HCT116 (cell line): ENCODE measurements at regions of chr17 and their contacts with region 1.

Region 1: DNA sequence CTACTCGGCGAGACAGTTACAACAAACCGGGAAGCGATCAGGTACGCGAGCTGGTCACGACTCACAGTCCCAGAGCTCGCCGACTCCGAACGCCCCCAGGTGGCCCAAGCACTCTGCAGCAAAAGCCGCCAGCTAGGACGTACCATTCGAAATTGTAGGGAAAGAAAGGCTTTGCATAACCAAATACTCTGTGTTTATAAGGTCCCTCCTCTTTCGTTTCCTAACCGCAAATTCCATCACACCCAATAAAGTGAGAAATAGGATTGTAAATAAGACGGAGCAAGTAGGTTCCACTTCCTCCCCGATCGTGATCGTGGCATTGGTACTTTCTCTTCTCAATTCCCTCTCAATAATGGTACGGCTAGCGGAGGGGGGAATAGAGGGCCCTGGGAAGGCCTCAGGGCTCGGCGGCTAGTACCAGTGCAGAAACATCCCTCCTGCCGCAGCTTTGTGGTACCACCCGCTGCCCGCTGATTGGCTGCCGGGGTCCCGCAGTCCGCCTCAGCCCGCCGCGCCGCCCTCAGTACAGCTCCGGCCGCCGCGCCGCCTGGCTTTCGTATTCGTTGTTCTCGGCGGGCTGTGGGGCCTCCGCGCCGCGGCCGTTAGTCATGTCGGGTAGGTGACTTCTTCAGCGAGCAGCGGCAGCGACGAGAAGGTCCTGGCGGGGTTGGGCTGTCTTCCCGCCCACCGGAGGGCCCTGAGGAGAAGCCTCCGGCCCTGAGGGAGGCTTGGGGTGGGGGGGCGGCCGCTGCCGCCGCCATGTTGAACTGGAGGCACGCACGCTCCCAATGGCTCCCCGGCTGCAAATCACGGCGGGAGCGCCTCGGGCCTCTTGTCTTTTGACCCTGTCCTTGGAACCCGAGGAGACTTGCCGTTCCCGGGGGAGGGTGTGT is at the start of gene TAF15:
- DNase-seq: peak; percentile 95
- ATAC-seq: peak; percentile 89
- H3K4me3 ChIP-seq: peak within 1 kb of the TSS; percentile 76 to 89
- H3K27ac ChIP-seq: peak within 1 kb of the TSS; percentile 66
- H3K4me1 ChIP-seq: peaks cover 25 to 41% of the 10 kb centered on the region in 2 experiments
- H3K27me3 ChIP-seq: no peaks in the 10 kb centered on the region
- CTCF ChIP-seq: peak; percentile 75 to 86 (median 78); a peak in 5 of 6 replicates
- POLR2A ChIP-seq: peak; percentile 77
- RAD21 ChIP-seq: peak; percentile 57
- total RNA-seq, gene TAF15: 346 TPM

Region 2: GRCh38 chr17:35612924-35613521 is 196.2 kb before region 1 on chr17:
- CTCF ChIA-PET with region 1: interaction called, 3 read pairs
- POLR2A ChIA-PET with region 1: no interaction called
- RAD21 ChIA-PET with region 1: no interaction called
- intact Hi-C with region 1: loop called (anchors 10 kb)
- DNase-seq: peak; percentile 12
- ATAC-seq: peak; percentile 58
- H3K4me3 ChIP-seq: no peak overlapping the region
- H3K27ac ChIP-seq: no peak overlapping the region
- H3K4me1 ChIP-seq: no peaks in the 10 kb centered on the region
- H3K27me3 ChIP-seq: no peaks in the 10 kb centered on the region
- CTCF ChIP-seq: peak; percentile 44 to 75 (median 68); a peak in 5 of 6 replicates
- POLR2A ChIP-seq: no peak
- RAD21 ChIP-seq: peak; percentile 62

Region 3: DNA sequence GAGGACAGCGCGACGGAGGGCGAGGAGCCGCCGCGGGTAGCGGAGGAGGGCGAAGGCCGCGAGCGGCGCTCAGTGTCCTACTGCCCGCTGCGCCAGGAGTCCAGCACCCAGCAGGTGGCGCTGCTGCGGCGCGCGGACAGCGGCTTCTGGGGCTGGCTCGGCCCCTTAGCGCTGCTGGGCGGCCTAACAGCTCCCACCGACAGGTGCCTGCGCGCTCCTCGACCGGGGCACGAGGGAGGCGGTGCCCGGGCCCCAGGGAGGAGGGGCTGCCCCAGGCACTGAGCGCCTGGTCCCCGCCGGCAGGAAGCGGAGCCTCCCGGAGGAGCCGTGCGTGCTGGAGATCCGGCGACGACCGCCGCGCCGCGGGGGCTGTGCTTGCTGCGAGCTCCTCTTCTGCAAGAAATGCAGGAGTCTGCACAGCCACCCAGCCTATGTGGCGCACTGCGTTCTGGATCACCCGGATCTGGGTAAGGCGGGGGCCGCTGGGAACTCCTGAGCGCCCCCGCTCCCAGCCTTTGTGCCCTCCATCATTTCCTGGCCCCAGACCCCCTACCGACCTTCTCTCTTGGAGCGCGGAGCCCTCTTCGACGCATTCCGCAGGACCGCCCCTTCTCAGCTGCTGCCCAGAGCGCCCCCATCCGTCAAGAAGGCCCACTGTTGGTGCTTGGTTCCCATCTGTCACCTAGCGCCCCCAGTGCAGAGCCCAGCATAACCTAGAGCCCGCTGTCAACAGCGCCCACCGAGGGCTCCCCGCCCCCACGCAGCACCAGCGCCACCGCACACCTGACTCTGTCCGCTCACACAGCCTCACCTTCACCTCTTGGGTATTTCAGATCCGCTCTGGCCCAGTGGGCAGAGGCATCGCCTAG is 44.9 kb before region 1 on chr17:
- CTCF ChIA-PET with region 1: interaction called, 76 read pairs
- POLR2A ChIA-PET with region 1: interaction called, 41 read pairs
- RAD21 ChIA-PET with region 1: interaction called, 7 to 10 read pairs
- intact Hi-C with region 1: loop called (anchors 1 kb)
- DNase-seq: peak; percentile 79
- ATAC-seq: peak; percentile 94
- H3K4me3 ChIP-seq: peak overlapping the region; percentile 35 to 36
- H3K27ac ChIP-seq: peak overlapping the region; percentile 55; the same call in 1 of the 2 replicates
- H3K4me1 ChIP-seq: peaks cover 5 to 12% of the 10 kb centered on the region in 2 experiments; a peak in 3 of 4 replicates
- H3K27me3 ChIP-seq: no peaks in the 10 kb centered on the region
- CTCF ChIP-seq: peak; percentile 67 to 95 (median 95)
- POLR2A ChIP-seq: no peak
- RAD21 ChIP-seq: peak; percentile 94

Region 4: GRCh38 chr17:35788504-35789368 is 20.5 kb before region 1 on chr17:
- CTCF ChIA-PET with region 1: interaction called, 5 read pairs
- POLR2A ChIA-PET with region 1: interaction called, 14 read pairs
- RAD21 ChIA-PET with region 1: interaction called in 1 of 2 experiments, 3 read pairs
- intact Hi-C with region 1: loop called (anchors 1 kb)
- DNase-seq: no peak
- ATAC-seq: peak; percentile 76
- H3K4me3 ChIP-seq: peak overlapping the region in 1 of 2 experiments; percentile 22; a peak in 1 of 4 replicates
- H3K27ac ChIP-seq: no peak overlapping the region
- H3K4me1 ChIP-seq: peaks cover 12 to 59% of the 10 kb centered on the region in 2 experiments
- H3K27me3 ChIP-seq: no peaks in the 10 kb centered on the region
- CTCF ChIP-seq: no peak
- POLR2A ChIP-seq: no peak
- RAD21 ChIP-seq: no peak

Region 5: DNA sequence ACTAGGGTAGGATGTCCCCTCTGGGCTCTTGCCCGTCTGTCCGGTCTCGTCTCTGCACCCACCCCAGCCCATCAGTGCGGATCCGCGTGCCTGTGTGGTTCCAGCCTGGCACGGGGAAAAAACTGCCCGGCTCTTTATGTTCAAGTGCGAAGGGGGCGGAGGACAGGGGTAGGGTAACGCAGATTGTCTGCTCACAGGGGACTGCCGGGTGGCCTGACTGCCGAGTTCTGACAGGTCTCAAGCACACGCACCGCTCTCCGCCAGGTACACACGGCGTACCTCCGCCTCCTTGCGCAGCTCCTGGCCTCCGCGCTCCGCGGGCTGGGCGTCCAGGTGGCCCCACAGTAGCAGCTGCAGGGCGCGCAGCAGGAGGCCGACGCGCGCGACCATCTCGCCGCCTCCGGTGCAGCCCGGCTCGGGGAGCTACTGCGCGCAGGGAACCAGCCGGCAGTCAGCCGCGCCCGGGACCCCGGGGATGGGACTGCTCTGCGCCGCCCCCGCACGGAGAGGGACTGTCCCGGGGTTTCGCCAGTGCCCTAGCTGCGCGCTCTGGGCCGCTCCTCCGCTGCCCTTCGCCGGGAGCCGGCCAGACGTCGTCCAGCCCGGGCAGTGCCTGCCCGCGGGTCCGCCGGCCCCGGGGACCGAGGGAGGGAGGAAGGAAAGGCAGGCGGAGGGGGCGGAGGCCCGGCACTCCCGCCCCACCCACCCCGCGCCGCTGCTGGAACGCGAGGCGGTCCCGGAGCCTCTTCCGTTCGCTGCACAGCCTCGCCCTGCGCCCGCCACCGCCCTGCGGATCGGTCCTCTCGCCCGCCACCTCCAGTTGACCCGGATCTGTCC is 14.0 kb before region 1 on chr17 and contains the start of gene MMP28:
- CTCF ChIA-PET with region 1: interaction called, 6 read pairs
- POLR2A ChIA-PET with region 1: interaction called, 14 read pairs
- RAD21 ChIA-PET with region 1: no interaction called
- intact Hi-C with region 1: loop called (anchors 1 kb)
- DNase-seq: no peak
- ATAC-seq: peak; percentile 81
- H3K4me3 ChIP-seq: peak within 1 kb of the TSS; percentile 46 to 68
- H3K27ac ChIP-seq: no peak within 1 kb of the TSS; the same call in 1 of the 2 replicates
- H3K4me1 ChIP-seq: peaks cover 7 to 32% of the 10 kb centered on the region in 2 experiments
- H3K27me3 ChIP-seq: no peaks in the 10 kb centered on the region
- CTCF ChIP-seq: no peak
- POLR2A ChIP-seq: no peak
- RAD21 ChIP-seq: no peak
- total RNA-seq, gene MMP28: 2.6 TPM